MCF 10A (cell line): ENCODE measurements at regions of chr5 and their contacts with region 1.

Region 1: DNA sequence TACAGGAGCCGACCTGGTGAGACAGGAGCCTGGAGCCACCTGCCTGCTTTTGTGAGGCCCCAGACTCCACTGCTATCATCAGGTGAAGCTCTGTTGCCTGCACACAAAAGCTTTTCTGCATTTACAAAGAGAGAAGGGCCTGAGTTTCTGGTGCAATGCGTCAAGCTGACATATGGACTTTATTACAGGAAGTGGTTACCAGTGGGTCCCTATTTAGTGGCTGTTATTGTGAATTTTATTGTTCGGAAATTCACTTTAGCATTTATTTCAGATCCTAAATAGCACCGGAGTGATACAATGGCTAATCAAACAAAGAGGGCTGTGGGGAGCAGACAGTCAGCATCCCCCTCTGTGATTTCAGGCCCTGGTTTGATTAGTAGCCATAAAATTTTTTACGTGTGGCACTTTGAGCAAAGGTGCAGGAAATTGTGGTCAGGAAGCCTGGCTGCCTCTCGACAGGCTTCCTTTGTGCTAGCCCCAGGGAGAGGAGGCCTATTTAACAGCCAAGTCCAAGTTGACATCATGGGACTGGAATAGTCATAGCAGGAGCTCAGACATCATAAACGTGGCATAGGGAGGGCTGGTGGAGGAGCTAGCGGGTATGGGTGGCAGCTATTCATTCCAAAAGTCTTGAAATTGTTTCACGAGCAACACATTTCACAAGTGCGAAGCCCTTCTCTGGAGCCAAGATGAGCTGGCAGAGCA is 8.4 kb downstream of the TGFBI start:
- DNase-seq: peak; percentile 89
- H3K4me3 Mint-ChIP-seq: peak overlapping the region; percentile 48
- H3K27ac Mint-ChIP-seq: peak overlapping the region; percentile 76
- H3K4me1 Mint-ChIP-seq: peaks cover 77% of the 10 kb centered on the region
- H3K27me3 Mint-ChIP-seq: no peaks in the 10 kb centered on the region
- CTCF ChIP-seq: no peak

Region 2: GRCh38 chr5:134845852-134846640 is 1191.1 kb before region 1 on chr5 and contains the start of gene C5orf24:
- CTCF ChIA-PET with region 1: no interaction called
- POLR2A ChIA-PET with region 1: no interaction called
- intact Hi-C with region 1: no loop called
- DNase-seq: peak; percentile 97
- H3K4me3 Mint-ChIP-seq: peak within 1 kb of the TSS; percentile 96
- H3K27ac Mint-ChIP-seq: peak within 1 kb of the TSS; percentile 98
- H3K4me1 Mint-ChIP-seq: peaks cover 25% of the 10 kb centered on the region
- H3K27me3 Mint-ChIP-seq: no peaks in the 10 kb centered on the region
- CTCF ChIP-seq: no peak
- total RNA-seq, gene C5orf24: 61.4 and 66.0 TPM in 2 replicates

Region 3: GRCh38 chr5:135937245-135937915 is 99.8 kb before region 1 on chr5:
- CTCF ChIA-PET with region 1: interaction called, 11 read pairs
- POLR2A ChIA-PET with region 1: interaction called, 13 read pairs
- intact Hi-C with region 1: no loop called
- DNase-seq: no peak
- H3K4me3 Mint-ChIP-seq: no peak overlapping the region
- H3K27ac Mint-ChIP-seq: no peak overlapping the region
- H3K4me1 Mint-ChIP-seq: no peaks in the 10 kb centered on the region
- H3K27me3 Mint-ChIP-seq: peaks cover 34% of the 10 kb centered on the region
- CTCF ChIP-seq: no peak

Region 4: GRCh38 chr5:136020383-136021015 is 16.7 kb before region 1 on chr5:
- CTCF ChIA-PET with region 1: interaction called, 171 read pairs
- POLR2A ChIA-PET with region 1: interaction called, 1,604 read pairs
- intact Hi-C with region 1: no loop called
- DNase-seq: peak; percentile 100
- H3K4me3 Mint-ChIP-seq: peak overlapping the region; percentile 49
- H3K27ac Mint-ChIP-seq: peak overlapping the region; percentile 63
- H3K4me1 Mint-ChIP-seq: peaks cover 61% of the 10 kb centered on the region
- H3K27me3 Mint-ChIP-seq: no peaks in the 10 kb centered on the region
- CTCF ChIP-seq: no peak

Region 5: DNA sequence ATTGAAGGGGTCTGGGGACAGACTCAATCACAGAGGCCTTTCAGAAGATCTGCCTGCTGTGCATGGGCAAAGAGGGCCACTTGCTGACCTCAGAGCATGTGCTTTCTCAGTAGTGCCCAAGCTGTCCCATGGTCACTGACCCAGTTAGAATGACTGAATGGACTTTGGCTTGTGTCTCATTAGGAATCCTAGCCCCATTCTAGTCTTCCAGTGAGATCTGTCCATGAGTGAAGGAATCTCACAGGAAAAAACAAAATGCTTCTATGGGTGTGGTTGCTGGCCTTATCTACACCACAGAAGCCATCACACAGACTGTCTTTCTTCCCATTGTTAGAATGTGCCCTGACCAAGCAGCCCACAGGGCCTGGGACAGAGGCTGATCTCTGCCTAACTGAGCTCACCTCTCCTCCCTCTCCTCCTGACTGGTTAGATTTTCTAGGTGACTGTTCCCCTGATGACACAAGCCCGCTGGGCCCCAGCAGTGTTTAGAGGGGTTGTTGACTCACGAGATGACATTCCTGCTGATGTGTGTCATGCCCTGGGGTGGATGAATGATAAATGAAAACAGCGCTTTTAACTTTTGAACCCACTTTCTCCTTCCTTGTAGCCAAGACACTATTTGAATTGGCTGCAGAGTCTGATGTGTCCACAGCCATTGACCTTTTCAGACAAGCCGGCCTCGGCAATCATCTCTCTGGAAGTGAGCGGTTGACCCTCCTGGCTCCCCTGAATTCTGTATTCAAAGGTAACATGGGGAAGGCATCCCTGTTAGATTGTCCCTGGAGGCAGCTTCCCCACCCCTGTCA is 16.4 kb after region 1 on chr5:
- CTCF ChIA-PET with region 1: interaction called, 16 read pairs
- POLR2A ChIA-PET with region 1: interaction called, 364 read pairs
- intact Hi-C with region 1: loop called (anchors 1 kb)
- DNase-seq: peak; percentile 98
- H3K4me3 Mint-ChIP-seq: no peak overlapping the region
- H3K27ac Mint-ChIP-seq: peak overlapping the region; percentile 85
- H3K4me1 Mint-ChIP-seq: peaks cover 52% of the 10 kb centered on the region
- H3K27me3 Mint-ChIP-seq: no peaks in the 10 kb centered on the region
- CTCF ChIP-seq: no peak

Region 6: DNA sequence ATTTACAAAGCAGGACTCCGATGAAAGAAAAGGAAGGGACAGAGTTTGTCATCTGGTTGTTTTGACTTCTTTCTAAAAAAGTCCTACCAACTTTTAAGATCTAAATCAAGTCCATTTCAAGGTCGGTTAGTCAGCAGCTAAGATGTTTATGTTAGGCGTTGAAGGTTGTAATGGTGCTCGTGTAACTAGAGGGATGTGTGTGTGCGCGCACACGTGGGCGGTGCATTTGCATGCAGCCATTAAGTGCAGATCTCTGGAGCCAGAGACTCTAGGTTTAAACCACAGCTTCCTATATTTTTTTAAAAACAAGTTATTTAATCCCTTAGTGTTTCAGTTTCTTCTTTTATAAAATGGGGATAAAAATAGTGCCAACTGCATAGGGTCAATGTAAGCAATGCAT is 232.8 kb after region 1 on chr5:
- CTCF ChIA-PET with region 1: no interaction called
- POLR2A ChIA-PET with region 1: no interaction called
- intact Hi-C with region 1: no loop called
- DNase-seq: no peak
- H3K4me3 Mint-ChIP-seq: no peak overlapping the region
- H3K27ac Mint-ChIP-seq: no peak overlapping the region
- H3K4me1 Mint-ChIP-seq: no peaks in the 10 kb centered on the region
- H3K27me3 Mint-ChIP-seq: peaks cover 59% of the 10 kb centered on the region
- CTCF ChIP-seq: no peak

Region 7: DNA sequence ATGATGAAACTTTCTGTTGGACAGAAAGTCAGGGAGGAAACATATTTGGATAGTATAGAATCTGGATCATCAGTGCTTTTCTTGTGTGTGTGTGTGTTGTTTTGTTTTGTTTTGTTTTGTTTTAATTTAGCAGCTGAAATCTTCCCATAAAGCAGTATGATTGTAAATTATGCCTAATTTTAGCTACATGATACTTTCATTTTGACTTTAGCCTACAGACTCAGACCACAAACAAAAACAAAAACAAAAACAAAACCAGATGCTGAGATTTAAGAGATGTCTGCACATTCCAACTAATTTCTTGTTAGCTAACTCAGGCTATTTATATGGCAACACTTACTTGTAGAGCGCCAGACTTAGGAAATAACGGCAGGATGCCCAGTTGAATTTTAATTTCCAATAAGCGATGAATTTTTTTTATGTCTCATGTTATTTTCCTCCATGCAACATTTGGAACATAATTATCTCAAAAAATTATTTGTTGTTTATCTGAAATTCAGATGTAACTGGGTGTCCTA is 447.7 kb after region 1 on chr5:
- CTCF ChIA-PET with region 1: no interaction called
- POLR2A ChIA-PET with region 1: no interaction called
- intact Hi-C with region 1: no loop called
- DNase-seq: no peak
- H3K4me3 Mint-ChIP-seq: no peak overlapping the region
- H3K27ac Mint-ChIP-seq: no peak overlapping the region
- H3K4me1 Mint-ChIP-seq: no peaks in the 10 kb centered on the region
- H3K27me3 Mint-ChIP-seq: peaks cover 47% of the 10 kb centered on the region
- CTCF ChIP-seq: no peak